Heart right ventricle (tissue), 16 donors: ENCODE measurements at regions of chr7 and their contacts with region 1.

Region 1: DNA sequence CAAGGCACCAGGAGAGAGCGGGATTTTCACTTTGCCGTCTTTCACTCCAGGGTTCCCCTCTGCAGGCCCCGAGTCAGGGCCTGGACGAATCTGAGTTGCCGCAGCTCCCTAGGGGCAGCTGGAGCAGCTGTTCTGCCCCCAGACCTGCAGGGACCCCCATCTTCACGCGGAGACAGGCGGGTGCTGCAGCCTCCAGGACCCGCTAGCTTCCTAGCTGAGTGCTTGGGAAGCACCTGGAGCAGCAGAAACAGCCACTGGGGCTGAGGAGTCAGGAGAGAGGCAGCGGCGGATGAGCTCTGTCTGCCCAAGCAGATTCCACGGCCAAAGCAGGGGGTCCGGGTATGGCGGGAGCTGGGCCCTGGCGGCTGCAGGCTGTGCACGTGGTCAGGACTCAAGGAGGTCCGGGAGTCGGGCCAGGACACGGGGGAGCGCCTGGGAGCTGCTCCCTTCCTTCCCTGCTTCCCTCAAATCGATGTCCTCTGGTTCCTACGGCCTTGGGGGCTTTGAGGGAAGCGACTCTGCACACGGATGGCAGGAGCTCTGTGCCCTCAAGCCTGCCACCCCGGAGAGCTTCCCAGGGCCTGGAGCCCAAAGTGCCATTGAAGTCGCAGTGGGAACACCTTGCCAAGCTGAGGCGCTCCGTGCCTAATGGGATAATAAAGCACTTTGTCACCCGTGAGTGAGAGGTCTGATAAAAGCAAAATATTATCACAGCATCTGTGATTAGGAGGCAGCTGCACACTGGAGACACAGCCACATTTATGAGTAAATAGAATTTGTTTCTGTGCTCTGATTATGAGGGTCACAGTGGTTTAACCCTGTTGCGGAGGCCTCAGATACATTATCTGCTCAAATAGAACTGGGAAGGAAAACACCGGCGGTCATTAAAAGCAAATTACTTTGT is 17.2 kb downstream of the MNX1 start:
- DNase-seq: no peak
- ATAC-seq: peak in 4 of 8 donors; percentile 58 to 74 (median 64)
- H3K4me3 ChIP-seq: no peak overlapping the region
- H3K27ac ChIP-seq: no peak overlapping the region
- H3K4me1 ChIP-seq: peaks cover 0 to 9% (median 0%) of the 10 kb centered on the region in 9 donors
- H3K27me3 ChIP-seq: peaks cover 0 to 82% (median 74%) of the 10 kb centered on the region in 7 donors
- CTCF ChIP-seq: no peak

Region 2: DNA sequence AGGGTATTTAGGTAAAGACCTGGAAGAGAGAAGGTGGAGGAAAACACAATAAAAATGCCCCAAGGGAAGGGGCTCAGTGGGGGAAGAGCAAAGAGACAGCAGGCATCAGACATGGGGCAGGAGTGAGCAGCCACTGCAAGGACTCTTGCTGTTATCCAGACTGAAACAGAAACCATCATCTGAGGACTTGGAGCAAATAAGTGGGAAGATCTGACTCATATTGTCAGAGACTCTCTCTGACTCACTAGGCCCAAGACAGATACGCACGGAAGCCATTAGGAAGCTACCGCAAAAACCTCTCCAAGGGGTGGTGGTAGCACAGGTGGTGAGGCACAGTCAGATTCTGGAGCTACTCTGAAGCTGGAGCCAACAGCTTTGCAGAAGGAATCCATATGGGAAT is 242.0 kb before region 1 on chr7:
- intact Hi-C with region 1: loop called in 1 of 10 experiments (anchors 5 kb)
- DNase-seq: no peak
- ATAC-seq: no peak
- H3K4me3 ChIP-seq: no peak overlapping the region
- H3K27ac ChIP-seq: no peak overlapping the region
- H3K4me1 ChIP-seq: peaks cover 0 to 3% (median 0%) of the 10 kb centered on the region in 9 donors
- H3K27me3 ChIP-seq: no peaks in the 10 kb centered on the region
- CTCF ChIP-seq: no peak